PC-9 (cell line): ENCODE measurements at regions of chr5 and their contacts with region 1.

Region 1: GRCh38 chr5:31232273-31232888 is 38.9 kb downstream of the CDH6 start:
- DNase-seq: peak in 1 of 2 experiments; percentile 29
- H3K4me3 ChIP-seq: no peak overlapping the region
- H3K27ac ChIP-seq: no peak overlapping the region
- H3K4me1 ChIP-seq: no peaks in the 10 kb centered on the region
- H3K27me3 ChIP-seq: no peaks in the 10 kb centered on the region; the same call in 1 of the 2 replicates
- CTCF ChIP-seq: peak; percentile 89

Region 2: GRCh38 chr5:30040488-30041118 is 1191.8 kb before region 1 on chr5:
- CTCF ChIA-PET with region 1: interaction called, 13 read pairs
- POLR2A ChIA-PET with region 1: no interaction called
- intact Hi-C with region 1: loop called (anchors 1 kb)
- DNase-seq: peak; percentile 49 to 65
- H3K4me3 ChIP-seq: no peak overlapping the region
- H3K27ac ChIP-seq: no peak overlapping the region
- H3K4me1 ChIP-seq: no peaks in the 10 kb centered on the region
- H3K27me3 ChIP-seq: no peaks in the 10 kb centered on the region
- CTCF ChIP-seq: peak; percentile 92

Region 3: GRCh38 chr5:30401479-30402058 is 830.8 kb before region 1 on chr5:
- CTCF ChIA-PET with region 1: no interaction called
- POLR2A ChIA-PET with region 1: no interaction called
- intact Hi-C with region 1: loop called (anchors 1 kb)
- DNase-seq: peak in 1 of 2 experiments; percentile 34
- H3K4me3 ChIP-seq: no peak overlapping the region
- H3K27ac ChIP-seq: no peak overlapping the region
- H3K4me1 ChIP-seq: no peaks in the 10 kb centered on the region
- H3K27me3 ChIP-seq: no peaks in the 10 kb centered on the region
- CTCF ChIP-seq: peak; percentile 76

Region 4: GRCh38 chr5:31415011-31415923 is 182.9 kb after region 1 on chr5:
- CTCF ChIA-PET with region 1: no interaction called
- POLR2A ChIA-PET with region 1: no interaction called
- intact Hi-C with region 1: loop called (anchors 1 kb)
- DNase-seq: no peak
- H3K4me3 ChIP-seq: no peak overlapping the region
- H3K27ac ChIP-seq: no peak overlapping the region
- H3K4me1 ChIP-seq: no peaks in the 10 kb centered on the region
- H3K27me3 ChIP-seq: no peaks in the 10 kb centered on the region
- CTCF ChIP-seq: peak; percentile 31; the same call in 1 of the 2 replicates

Region 5: GRCh38 chr5:31449174-31449573 is 216.8 kb after region 1 on chr5:
- CTCF ChIA-PET with region 1: no interaction called
- POLR2A ChIA-PET with region 1: no interaction called
- intact Hi-C with region 1: no loop called
- DNase-seq: no peak
- H3K4me3 ChIP-seq: no peak overlapping the region
- H3K27ac ChIP-seq: no peak overlapping the region
- H3K4me1 ChIP-seq: no peaks in the 10 kb centered on the region
- H3K27me3 ChIP-seq: no peaks in the 10 kb centered on the region
- CTCF ChIP-seq: no peak

Region 6: GRCh38 chr5:31487506-31487905 is 255.1 kb after region 1 on chr5:
- CTCF ChIA-PET with region 1: no interaction called
- POLR2A ChIA-PET with region 1: no interaction called
- intact Hi-C with region 1: loop called (anchors 10 kb)
- DNase-seq: no peak
- H3K4me3 ChIP-seq: no peak overlapping the region
- H3K27ac ChIP-seq: no peak overlapping the region
- H3K4me1 ChIP-seq: no peaks in the 10 kb centered on the region
- H3K27me3 ChIP-seq: no peaks in the 10 kb centered on the region
- CTCF ChIP-seq: 0 out of 2 replicates have a peak, but pooled peaks have one; percentile 26

Region 7: DNA sequence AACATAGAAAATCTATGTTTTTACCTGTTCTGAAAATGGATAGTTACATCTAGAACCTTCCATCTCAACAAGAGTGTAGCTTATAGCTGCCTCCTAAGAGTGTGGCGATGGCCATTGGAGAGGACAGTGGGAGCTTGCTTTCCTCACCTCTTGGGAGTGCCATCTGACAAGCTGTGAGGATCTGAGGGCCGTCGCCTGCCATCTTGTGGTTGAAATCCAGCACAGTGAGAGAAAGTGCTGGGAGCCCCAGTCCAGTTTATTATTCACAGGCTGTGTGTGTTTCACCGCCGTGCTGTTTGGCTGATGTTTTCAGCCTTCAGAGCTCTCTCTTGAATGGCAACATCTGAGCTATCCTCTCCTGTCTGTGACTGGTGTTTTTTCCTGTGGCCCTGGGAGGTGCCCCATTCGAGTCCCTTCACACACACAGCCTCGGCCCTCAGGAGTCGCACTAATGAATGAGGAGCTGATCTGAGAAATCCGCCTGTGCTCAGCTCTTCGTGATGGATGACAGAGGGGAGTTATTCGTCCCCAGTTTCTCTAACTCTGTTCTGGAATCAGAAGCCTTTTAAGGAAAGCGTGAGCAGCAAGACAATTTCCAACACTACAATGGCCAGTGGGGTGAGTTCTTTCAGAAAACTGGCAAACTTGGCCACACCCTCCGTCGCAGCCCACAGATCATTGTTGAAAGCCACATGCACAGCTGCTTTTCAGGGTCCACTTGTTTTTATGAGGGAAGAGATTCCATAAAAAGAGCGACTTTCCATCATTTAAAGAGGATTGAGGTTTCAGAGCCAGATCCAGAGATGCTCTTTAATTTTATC is 576.9 kb after region 1 on chr5:
- CTCF ChIA-PET with region 1: no interaction called
- POLR2A ChIA-PET with region 1: no interaction called
- intact Hi-C with region 1: loop called (anchors 2 kb)
- DNase-seq: peak in 1 of 2 experiments; percentile 67
- H3K4me3 ChIP-seq: no peak overlapping the region
- H3K27ac ChIP-seq: no peak overlapping the region
- H3K4me1 ChIP-seq: no peaks in the 10 kb centered on the region
- H3K27me3 ChIP-seq: peaks cover 69% of the 10 kb centered on the region
- CTCF ChIP-seq: peak; percentile 61

Region 8: DNA sequence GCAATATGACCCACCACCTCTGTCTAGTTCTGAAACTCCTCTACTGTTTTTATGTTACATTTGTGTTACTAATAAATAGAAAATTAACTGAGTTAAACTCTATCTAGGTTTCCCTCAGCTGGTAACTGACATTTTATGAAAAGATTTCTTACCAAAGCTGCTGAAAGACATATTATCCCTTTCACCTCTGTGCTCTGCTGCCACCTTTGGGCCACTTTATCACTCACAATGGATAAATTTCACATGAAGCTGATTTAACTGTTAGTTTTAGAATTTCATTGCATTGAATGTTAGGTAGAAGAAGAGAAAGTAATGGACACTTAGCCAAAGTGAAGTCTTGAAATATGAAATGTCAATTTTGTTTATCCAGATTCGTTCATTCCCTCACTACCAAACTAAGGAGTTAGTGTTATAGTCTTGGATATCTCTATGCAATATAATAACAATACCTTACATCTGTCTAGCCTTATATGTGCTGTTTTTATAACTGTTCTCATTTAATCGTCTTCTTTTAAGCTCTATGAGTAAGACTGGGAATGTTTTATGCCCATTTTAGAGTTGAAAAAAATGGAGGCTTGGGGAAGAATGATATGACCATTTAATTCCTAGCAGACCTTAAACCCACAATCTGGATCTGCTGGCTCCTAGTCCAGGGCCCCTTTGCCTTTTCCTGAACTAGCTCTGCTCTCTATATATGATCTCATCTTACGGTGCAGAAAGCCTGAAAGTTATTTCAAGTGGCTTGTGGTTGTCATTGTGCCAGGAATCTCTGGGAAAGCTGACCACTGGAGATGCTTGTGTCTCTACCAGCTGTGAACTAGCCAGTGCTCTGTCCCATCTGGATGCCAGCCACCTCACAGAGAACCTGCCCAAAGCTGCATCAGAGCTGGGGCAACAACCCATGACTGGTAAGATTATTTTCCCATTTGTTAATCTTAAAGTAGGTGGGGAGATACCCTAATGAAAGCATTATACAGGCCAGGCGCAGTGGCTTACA is 844.6 kb after region 1 on chr5:
- CTCF ChIA-PET with region 1: no interaction called
- POLR2A ChIA-PET with region 1: no interaction called
- intact Hi-C with region 1: loop called (anchors 5 kb)
- DNase-seq: peak; percentile 47
- H3K4me3 ChIP-seq: no peak overlapping the region
- H3K27ac ChIP-seq: no peak overlapping the region
- H3K4me1 ChIP-seq: no peaks in the 10 kb centered on the region
- H3K27me3 ChIP-seq: peaks cover 20% of the 10 kb centered on the region
- CTCF ChIP-seq: peak; percentile 90